ENCODE measurements at regions of chr7 and their contacts with region 1.

Region 1: DNA sequence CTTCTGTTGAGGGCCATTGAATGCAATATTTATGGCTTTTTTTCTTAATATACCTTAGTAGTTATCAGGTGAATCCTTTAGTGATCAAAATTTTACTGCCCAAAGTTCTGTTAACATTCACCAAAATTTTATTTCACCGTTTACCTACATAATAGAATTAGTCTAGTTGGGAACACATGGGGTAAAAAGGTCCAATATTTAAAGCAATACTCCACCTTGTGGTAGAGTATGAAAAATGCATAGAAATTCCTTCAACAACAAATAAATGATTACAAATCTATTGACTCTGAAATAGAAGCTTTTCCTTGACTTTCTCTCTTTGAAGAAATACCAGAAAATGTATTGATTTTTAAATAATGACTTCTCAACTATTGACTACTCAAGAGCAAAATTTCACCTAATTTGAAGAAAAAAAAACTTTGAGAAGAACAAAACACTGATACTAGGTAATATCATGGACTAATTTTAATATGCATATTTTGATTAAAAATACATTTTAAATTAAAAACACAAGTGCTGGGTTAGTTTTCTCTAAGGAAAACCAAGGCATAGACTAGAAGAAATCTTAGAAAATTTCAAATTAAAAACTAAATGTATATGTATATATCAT is 43.3 kb downstream of the POLR1F start:
- DNase-seq: no peak
- H3K4me3 ChIP-seq: no peak overlapping the region
- H3K27ac ChIP-seq: no peak overlapping the region
- H3K4me1 ChIP-seq: no peaks in the 10 kb centered on the region
- H3K27me3 ChIP-seq: no peaks in the 10 kb centered on the region
- CTCF ChIP-seq: peak in 3 of 4 experiments; percentile 45 to 59 (median 52)
- POLR2A ChIP-seq: no peak

Region 2: GRCh38 chr7:17680943-17681351 is 1984.6 kb before region 1 on chr7:
- intact Hi-C with region 1: loop called (anchors 5 kb)
- DNase-seq: no peak
- H3K4me3 ChIP-seq: no peak overlapping the region
- H3K27ac ChIP-seq: no peak overlapping the region
- H3K4me1 ChIP-seq: no peaks in the 10 kb centered on the region
- H3K27me3 ChIP-seq: no peaks in the 10 kb centered on the region
- CTCF ChIP-seq: peak; percentile 18 to 67 (median 41)
- POLR2A ChIP-seq: no peak

Region 3: DNA sequence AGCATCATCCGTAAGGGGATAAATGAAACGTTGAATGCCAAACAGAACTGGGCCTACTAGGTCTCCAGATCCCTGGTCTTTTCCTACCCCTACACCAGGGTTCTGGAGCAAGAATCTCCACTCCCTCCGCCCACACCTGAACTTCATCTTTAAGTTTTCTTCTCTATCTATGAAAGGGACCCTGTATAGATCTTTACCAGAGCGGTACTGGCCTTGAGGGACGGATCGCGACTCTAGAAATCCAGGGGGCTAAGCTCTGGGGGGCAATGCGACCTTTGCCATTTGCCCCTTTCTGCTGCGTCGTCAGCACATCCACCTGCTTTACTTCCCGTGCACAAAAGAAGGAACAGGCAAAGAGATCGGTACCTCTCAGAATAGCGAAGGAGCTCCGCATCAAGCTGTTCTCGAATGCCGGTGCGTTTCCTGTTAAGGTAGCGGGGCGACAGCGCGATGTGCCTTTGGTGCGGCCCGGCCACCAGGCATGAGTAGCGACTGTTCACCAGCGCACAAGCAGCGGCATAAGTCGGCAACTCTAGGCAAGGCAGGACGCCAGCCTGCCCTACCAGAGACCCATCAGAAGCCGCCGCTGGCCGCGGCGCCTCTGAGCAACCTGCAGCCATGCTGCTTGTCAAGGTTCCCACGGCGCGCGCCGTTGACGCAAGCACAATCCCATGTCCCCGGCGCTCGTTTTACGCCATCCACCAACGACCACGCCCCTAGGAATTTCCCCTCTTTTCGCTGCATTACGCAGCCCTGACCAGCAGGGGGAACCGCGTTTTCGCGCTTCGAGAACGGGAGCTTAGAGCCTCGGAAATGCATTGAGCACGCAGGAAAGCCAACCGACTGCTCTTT is 43.1 kb after region 1 on chr7 and contains the start of gene POLR1F:
- intact Hi-C with region 1: no loop called
- DNase-seq: peak; percentile 94
- H3K4me3 ChIP-seq: peak within 1 kb of the TSS; percentile 67 to 85
- H3K27ac ChIP-seq: peak within 1 kb of the TSS; percentile 43 to 58
- H3K4me1 ChIP-seq: no peaks in the 10 kb centered on the region
- H3K27me3 ChIP-seq: no peaks in the 10 kb centered on the region
- CTCF ChIP-seq: peak; percentile 66 to 97 (median 94)
- POLR2A ChIP-seq: peak; percentile 76
- total RNA-seq, gene POLR1F: 13.0 to 13.6 TPM

Region 4: GRCh38 chr7:19728716-19729115 is 63.2 kb after region 1 on chr7:
- intact Hi-C with region 1: no loop called
- DNase-seq: no peak
- H3K4me3 ChIP-seq: no peak overlapping the region
- H3K27ac ChIP-seq: no peak overlapping the region
- H3K4me1 ChIP-seq: no peaks in the 10 kb centered on the region
- H3K27me3 ChIP-seq: no peaks in the 10 kb centered on the region
- CTCF ChIP-seq: no peak
- POLR2A ChIP-seq: no peak

Region 5: GRCh38 chr7:19762631-19763030 is 97.1 kb after region 1 on chr7:
- intact Hi-C with region 1: no loop called
- DNase-seq: no peak
- H3K4me3 ChIP-seq: no peak overlapping the region
- H3K27ac ChIP-seq: no peak overlapping the region
- H3K4me1 ChIP-seq: no peaks in the 10 kb centered on the region
- H3K27me3 ChIP-seq: no peaks in the 10 kb centered on the region
- CTCF ChIP-seq: no peak
- POLR2A ChIP-seq: no peak